T-cell (primary cell): ENCODE measurements at regions of chr3 and their contacts with region 1.

Region 1: GRCh38 chr3:152183473-152183872 is 85.3 kb upstream of the MBNL1 start:
- DNase-seq: peak in 34 of 35 experiments; percentile 3 to 79 (median 46)
- ATAC-seq: peak; percentile 76 to 87 (median 81)
- H3K4me3 ChIP-seq: no peak overlapping the region
- H3K4me3 Mint-ChIP-seq: peak overlapping the region in 2 of 3 donors; percentile 22 to 32
- H3K27ac ChIP-seq: peak overlapping the region; percentile 7
- H3K27ac Mint-ChIP-seq: peak overlapping the region; percentile 59 to 80
- H3K4me1 ChIP-seq: peaks cover 4% of the 10 kb centered on the region in 2 experiments
- H3K4me1 Mint-ChIP-seq: peaks cover 64 to 75% (median 69%) of the 10 kb centered on the region in 3 donors
- H3K27me3 ChIP-seq: no peaks in the 10 kb centered on the region
- H3K27me3 Mint-ChIP-seq: no peaks in the 10 kb centered on the region

Region 2: GRCh38 chr3:152444029-152444641 is 260.7 kb after region 1 on chr3:
- CTCF ChIA-PET with region 1: interaction called, 4 to 44 read pairs
- POLR2A ChIA-PET with region 1: interaction called in 1 of 2 experiments, 9 read pairs
- DNase-seq: peak in 1 of 35 experiments; percentile 64
- ATAC-seq: peak in 3 of 4 experiments; percentile 31 to 40 (median 36)
- H3K4me3 ChIP-seq: no peak overlapping the region
- H3K4me3 Mint-ChIP-seq: peak overlapping the region in 1 of 3 donors; percentile 1
- H3K27ac ChIP-seq: peak overlapping the region; percentile 8
- H3K27ac Mint-ChIP-seq: peak overlapping the region; percentile 40 to 73
- H3K4me1 ChIP-seq: peaks cover 8 to 15% of the 10 kb centered on the region in 2 experiments
- H3K4me1 Mint-ChIP-seq: peaks cover 77 to 83% (median 81%) of the 10 kb centered on the region in 3 donors
- H3K27me3 ChIP-seq: no peaks in the 10 kb centered on the region
- H3K27me3 Mint-ChIP-seq: no peaks in the 10 kb centered on the region

Region 3: DNA sequence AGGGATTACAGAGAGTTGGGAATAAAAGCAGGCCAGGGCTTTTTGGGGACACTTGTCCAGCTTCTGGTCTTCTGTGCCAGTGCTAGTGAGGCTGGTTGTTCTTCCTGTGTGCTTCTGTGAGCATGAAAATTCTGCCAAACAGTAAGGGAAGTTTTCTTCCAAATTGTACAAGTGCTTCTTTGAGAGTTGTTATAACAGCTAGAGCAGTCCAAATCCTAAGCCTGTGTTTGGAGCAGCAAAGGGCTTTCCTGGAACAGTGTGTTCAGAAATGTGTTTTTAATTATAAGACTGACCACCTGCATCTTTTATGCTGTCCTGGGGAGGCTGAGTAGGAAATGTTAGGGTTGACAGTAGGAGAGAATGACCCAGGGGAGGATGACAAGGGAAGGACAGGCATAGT is 428.4 kb after region 1 on chr3:
- CTCF ChIA-PET with region 1: interaction called in 1 of 2 experiments, 11 read pairs
- POLR2A ChIA-PET with region 1: no interaction called
- DNase-seq: no peak
- ATAC-seq: no peak
- H3K4me3 ChIP-seq: no peak overlapping the region
- H3K4me3 Mint-ChIP-seq: no peak overlapping the region
- H3K27ac ChIP-seq: no peak overlapping the region
- H3K27ac Mint-ChIP-seq: no peak overlapping the region
- H3K4me1 ChIP-seq: no peaks in the 10 kb centered on the region
- H3K4me1 Mint-ChIP-seq: peaks cover 0 to 5% (median 0%) of the 10 kb centered on the region in 3 donors
- H3K27me3 ChIP-seq: no peaks in the 10 kb centered on the region
- H3K27me3 Mint-ChIP-seq: peaks cover 3 to 13% of the 10 kb centered on the region in 2 donors